Activated CD4-positive, alpha-beta T cell treated with anti-CD3 and anti-CD28 coated beads for 36 hours (primary cell): ENCODE measurements at regions of chr19 and their contacts with region 1.

Region 1: DNA sequence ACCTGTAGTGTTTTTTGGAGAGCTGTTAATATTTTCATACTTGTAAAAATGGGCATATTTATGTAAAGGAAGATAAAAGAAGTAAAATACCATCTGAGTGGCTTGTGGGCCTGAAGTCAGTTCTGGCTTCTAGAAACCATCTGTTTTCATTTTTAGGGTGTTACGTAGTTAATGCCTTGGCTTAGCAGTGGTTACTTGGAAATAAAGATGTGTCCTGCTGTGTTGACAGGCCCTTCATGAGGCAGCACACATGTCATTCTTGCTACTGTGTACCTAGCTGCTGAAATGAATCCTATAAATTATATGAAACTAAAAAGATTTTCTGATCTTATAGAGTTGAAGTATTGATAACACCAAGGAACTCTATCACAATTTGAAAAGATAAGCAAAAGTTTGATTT is 16.0 kb downstream of the ILF3 start:
- DNase-seq: no peak
- ATAC-seq: no peak
- H3K4me3 Mint-ChIP-seq: no peak overlapping the region
- H3K27ac Mint-ChIP-seq: peak overlapping the region; percentile 31
- H3K4me1 Mint-ChIP-seq: peaks cover 28% of the 10 kb centered on the region
- H3K27me3 Mint-ChIP-seq: no peaks in the 10 kb centered on the region

Region 2: DNA sequence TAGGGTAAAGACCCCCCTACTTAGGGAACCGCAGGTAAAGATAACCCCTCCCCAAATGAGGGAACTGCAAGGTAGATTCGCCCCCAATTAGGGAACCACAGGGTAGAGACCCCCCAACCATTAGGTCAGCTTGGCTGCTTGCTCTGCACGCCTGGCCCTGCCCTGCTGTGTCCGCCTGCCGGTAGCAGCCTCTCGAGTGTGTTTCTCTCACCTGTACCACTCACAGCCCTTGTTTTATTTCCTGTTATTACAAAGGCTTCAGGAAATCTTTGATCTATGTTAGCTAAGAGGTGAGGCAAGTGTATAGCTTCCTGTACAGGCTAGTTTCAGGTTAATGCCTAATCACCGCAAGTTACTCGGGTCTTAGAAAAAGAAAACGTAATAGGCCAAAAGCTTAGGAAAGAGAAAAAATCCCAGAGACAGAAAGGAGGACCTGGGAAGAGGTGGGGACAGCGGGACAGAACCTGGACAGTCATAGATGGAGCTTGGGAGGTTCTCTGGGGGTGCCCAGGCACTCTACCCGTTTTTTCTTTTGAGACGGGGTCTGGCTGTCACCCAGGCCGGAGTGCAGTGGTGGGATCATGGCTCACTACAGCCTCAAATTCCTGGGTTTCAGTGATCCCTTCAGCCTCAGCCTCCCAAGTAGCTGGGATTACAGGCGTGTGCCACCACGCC is 527.3 kb before region 1 on chr19:
- CTCF ChIA-PET with region 1: no interaction called
- POLR2A ChIA-PET with region 1: no interaction called
- intact Hi-C with region 1: loop called in 1 of 2 experiments (anchors 10 kb)
- DNase-seq: peak; percentile 45
- ATAC-seq: peak; percentile 82
- H3K4me3 Mint-ChIP-seq: no peak overlapping the region
- H3K27ac Mint-ChIP-seq: peak overlapping the region; percentile 79
- H3K4me1 Mint-ChIP-seq: peaks cover 32% of the 10 kb centered on the region
- H3K27me3 Mint-ChIP-seq: no peaks in the 10 kb centered on the region